AG04449 (cell line): ENCODE measurements at regions of chr2 and their contacts with region 1.

Region 1: GRCh38 chr2:30115141-30115980 is 31.4 kb upstream of the YPEL5 start:
- DNase-seq: no peak
- H3K4me3 ChIP-seq: no peak overlapping the region
- CTCF ChIP-seq: peak; percentile 92

Region 2: DNA sequence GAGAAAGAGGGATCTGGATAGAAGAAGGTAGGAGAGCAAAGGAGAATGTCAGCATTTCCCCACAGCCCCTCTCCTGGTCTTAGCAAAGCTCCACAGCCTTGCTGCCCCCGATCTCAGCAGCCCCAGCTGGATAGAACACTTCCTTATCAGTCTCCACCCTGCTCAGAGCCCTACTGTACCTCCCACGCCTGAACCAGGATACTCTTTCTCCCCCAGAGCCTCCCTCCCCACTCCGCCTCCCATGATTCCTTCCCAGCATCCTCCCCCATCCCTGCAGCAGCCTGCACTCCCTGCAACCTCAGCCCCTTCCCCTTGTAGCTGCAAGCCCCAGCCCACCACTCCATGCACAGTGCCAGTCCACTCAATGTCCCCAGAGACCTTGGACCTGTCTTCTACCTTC is 1593.7 kb before region 1 on chr2:
- CTCF ChIA-PET with region 1: no interaction called
- POLR2A ChIA-PET with region 1: no interaction called
- DNase-seq: no peak
- H3K4me3 ChIP-seq: no peak overlapping the region
- CTCF ChIP-seq: no peak

Region 3: DNA sequence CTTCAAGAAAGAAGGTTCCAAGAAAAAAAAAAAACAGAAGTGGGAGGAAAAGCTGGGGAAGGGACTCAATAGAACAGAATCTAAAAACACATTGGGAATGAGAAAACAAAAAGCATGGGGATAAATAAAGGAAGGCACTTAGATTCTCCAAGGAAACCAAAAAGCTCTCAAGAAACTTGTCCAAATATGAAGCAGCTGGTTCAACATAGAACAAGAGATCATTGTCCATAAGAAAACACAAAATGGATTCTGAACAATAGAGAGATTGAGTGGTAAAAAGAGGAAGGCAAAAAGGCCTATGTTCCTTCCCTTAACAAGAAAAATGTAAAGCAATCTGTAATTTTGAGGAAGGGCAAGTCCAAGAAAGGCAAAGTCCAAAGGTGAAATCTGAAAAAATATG is 161.0 kb before region 1 on chr2:
- CTCF ChIA-PET with region 1: no interaction called
- POLR2A ChIA-PET with region 1: no interaction called
- DNase-seq: no peak
- H3K4me3 ChIP-seq: no peak overlapping the region
- CTCF ChIP-seq: no peak

Region 4: GRCh38 chr2:30089171-30089570 is 26.2 kb before region 1 on chr2:
- CTCF ChIA-PET with region 1: interaction called, 182 read pairs
- POLR2A ChIA-PET with region 1: interaction called, 4 read pairs
- DNase-seq: no peak
- H3K4me3 ChIP-seq: no peak overlapping the region
- CTCF ChIP-seq: no peak

Region 5: DNA sequence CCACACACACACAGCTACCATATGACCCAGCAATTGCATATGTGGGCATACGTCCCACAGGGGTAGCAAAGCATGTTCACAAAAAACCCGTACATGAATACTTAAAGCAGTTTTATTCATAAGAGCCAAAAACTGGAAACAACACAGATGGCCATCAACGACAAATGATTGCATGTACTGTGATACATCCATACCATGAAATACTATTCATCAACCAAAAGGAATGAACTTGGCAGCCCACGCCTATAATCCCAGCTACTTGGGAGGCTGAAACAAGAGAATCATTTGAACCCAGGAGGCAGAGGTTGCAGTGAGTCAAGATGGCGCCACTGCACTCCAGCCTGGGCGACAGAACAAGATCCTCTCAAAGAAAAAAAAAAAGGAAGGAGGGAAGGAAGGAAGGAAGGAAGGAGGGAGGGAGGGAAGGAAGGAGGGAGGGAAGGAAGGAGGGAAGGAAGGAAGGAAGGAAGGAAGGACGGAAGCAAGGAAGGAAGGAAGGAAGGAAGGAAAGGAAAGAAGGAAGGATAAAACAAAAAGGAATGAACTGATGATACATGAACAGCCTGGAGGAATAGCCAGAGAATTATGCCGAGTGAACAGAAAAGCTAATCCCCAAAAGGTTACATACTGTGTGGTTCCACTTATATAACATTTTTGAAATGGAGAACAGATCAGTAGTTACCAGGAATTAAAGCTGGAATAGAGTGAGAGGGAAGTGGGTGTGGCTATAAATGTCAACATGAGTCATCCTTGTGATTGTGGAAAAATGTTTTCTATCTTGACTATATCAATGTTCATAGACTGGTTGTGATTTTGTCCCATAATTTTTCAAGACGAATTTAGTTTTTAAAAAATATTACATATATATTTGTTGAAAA is 11.9 kb after region 1 on chr2:
- CTCF ChIA-PET with region 1: interaction called, 30 read pairs
- POLR2A ChIA-PET with region 1: no interaction called
- DNase-seq: no peak
- H3K4me3 ChIP-seq: no peak overlapping the region
- CTCF ChIP-seq: no peak

Region 6: DNA sequence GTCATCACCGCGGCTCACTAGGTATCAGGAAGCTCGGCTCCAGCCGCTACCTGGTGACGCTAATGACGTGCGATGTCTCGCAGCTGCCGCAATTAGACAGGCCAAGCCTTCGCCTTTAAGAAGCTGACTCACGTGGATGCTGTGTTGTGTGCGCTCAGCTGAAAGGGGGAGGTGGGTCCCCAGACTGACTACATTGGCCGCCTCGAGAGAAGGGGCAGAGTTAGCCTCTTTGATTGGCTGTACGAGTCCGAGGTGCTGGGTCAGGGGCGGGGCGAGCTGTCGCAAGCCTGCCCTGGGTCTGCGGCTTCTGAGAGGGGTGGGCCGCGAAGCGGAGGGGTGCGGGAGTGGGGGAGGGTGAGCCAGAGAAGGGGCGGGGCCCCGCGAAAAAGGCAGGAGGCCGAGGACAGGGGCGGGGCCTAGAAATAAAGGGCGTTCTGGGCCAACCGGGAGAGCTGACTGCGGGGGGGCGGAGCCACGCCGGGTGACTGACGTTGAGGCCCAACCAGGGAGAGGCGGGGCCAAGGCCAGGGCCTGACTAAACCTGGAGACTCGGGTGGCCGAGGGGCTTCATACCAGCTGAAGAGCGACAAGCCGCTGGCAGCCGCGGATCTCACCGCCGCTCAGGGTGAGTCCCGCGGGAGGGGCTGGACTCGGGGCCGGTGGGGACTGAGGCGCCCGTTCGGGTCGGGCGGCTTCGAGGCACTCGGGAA is 31.2 kb after region 1 on chr2 and contains the start of gene YPEL5:
- CTCF ChIA-PET with region 1: interaction called, 18 read pairs
- POLR2A ChIA-PET with region 1: interaction called, 5 read pairs
- DNase-seq: peak; percentile 97
- H3K4me3 ChIP-seq: peak within 1 kb of the TSS; percentile 82
- CTCF ChIP-seq: no peak